Activated T-helper 2 cell treated with anti-CD3 and anti-CD28 coated beads, Interferon-gamma antibody, Interleukin-2, Interleukin-4, amounts not matched to agents 10 μg/mL and 5 μg/mL and 100 μg/mL, durations not matched to agents 14 hours and 24 hours and 36 hours (primary cell): ENCODE measurements at regions of chr16 and their contacts with region 1.

Region 1: GRCh38 chr16:55543472-55543871 is 23.0 kb upstream of the CAPNS2 start:
- DNase-seq: no peak
- H3K4me3 Mint-ChIP-seq: no peak overlapping the region
- H3K27ac Mint-ChIP-seq: no peak overlapping the region
- H3K4me1 Mint-ChIP-seq: no peaks in the 10 kb centered on the region
- H3K27me3 Mint-ChIP-seq: no peaks in the 10 kb centered on the region

Region 2: DNA sequence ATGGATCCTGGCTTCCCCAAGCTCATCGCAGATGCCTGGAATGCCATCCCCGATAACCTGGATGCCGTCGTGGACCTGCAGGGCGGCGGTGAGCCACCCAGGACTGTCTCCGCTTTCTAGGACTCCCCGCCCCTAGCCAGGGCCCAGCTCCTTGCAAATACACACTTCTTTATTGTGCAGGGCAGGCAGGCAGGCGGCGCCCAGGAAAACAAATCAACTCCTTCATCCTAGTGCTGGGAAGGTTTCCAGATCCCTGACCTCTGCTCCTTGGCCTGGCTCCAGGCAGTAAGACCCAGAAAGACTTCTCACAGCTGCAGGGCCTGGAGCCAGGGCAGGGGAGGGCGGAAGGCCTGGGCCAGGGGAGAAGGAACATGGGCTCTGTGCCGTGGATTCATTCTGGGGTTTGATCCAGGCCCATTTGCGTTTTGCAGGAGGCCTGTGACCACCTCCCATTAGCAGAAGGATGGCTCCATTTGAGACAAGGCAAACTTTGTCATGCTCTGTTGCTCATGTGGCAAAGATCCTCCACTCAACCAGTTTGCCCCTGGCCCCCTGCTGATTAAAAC is 40.6 kb before region 1 on chr16:
- intact Hi-C with region 1: loop called (anchors 5 kb)
- DNase-seq: no peak
- H3K4me3 Mint-ChIP-seq: no peak overlapping the region
- H3K27ac Mint-ChIP-seq: no peak overlapping the region
- H3K4me1 Mint-ChIP-seq: peaks cover 23% of the 10 kb centered on the region
- H3K27me3 Mint-ChIP-seq: peaks cover 7% of the 10 kb centered on the region

Region 3: GRCh38 chr16:55701442-55702319 is 158.2 kb after region 1 on chr16:
- intact Hi-C with region 1: loop called (anchors 5 kb)
- DNase-seq: peak; percentile 16
- H3K4me3 Mint-ChIP-seq: no peak overlapping the region
- H3K27ac Mint-ChIP-seq: no peak overlapping the region
- H3K4me1 Mint-ChIP-seq: peaks cover 9% of the 10 kb centered on the region
- H3K27me3 Mint-ChIP-seq: peaks cover 4% of the 10 kb centered on the region